Activated CD4-positive, alpha-beta memory T cell treated with anti-CD3 and anti-CD28 coated beads for 36 hours (primary cell): ENCODE measurements at regions of chr18 and their contacts with region 1.

Region 1: DNA sequence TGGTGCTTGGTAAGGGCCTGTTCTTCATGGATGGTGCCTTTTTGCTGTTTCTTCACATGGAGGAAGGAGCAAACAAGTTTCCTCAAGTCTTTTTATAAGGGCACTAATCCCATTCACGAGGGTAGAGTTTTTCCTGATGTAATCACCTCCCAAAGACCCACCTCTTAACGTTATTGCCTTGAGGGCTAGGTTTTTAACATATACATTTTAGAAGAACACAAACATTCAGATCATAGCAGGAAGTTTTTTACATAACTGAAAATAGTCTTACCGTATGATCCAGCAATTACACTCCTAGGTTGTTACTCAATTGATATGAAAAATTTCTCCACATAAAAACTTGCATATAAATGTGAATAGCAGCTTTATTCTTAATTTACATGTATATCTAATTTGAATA is 976.3 kb downstream of the DSC3 start:
- DNase-seq: no peak
- H3K4me3 Mint-ChIP-seq: no peak overlapping the region
- H3K27ac Mint-ChIP-seq: no peak overlapping the region
- H3K4me1 Mint-ChIP-seq: no peaks in the 10 kb centered on the region
- H3K27me3 Mint-ChIP-seq: no peaks in the 10 kb centered on the region

Region 2: DNA sequence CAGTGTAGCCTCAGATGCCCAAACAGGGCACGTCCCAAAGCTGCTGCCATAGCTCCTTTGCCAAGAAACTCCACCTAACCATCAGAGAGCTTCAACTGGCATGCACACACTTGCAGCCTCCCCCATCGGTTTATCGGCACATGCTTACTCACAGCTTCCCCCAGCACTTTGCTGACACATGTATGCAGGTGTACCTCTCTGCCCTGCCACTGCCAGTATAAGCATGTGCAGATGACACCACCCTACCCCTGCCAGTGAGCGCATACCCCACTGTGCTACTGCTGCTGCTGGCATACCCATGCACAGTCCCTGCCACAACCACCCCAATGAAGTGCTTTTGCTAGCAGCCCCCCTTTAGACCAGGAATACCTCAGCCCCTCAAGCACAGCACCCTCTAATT is 254.8 kb before region 1 on chr18:
- CTCF ChIA-PET with region 1: no interaction called
- POLR2A ChIA-PET with region 1: no interaction called
- intact Hi-C with region 1: no loop called
- DNase-seq: no peak
- H3K4me3 Mint-ChIP-seq: no peak overlapping the region
- H3K27ac Mint-ChIP-seq: no peak overlapping the region
- H3K4me1 Mint-ChIP-seq: no peaks in the 10 kb centered on the region
- H3K27me3 Mint-ChIP-seq: no peaks in the 10 kb centered on the region

Region 3: DNA sequence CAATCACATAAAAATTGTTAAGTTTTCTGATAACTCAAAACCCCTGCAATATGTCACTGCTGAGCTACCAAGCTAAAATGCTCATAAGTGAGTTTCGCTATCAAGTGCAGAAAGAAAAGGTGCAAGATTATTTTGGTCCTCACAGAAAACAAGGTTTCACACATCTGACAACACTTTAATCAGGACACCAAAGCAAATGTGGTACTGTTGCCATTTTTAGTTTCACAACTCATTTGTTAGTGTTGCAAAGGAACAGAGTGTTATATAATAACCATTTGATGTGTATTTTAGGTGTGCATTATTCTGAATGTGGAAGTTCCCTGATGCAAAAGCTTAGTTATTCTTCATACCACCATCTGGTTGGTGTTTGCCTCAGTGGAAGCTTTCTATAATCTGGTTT is 20.1 kb after region 1 on chr18:
- CTCF ChIA-PET with region 1: no interaction called
- POLR2A ChIA-PET with region 1: no interaction called
- intact Hi-C with region 1: loop called (anchors 2 kb)
- DNase-seq: no peak
- H3K4me3 Mint-ChIP-seq: no peak overlapping the region
- H3K27ac Mint-ChIP-seq: no peak overlapping the region
- H3K4me1 Mint-ChIP-seq: no peaks in the 10 kb centered on the region
- H3K27me3 Mint-ChIP-seq: no peaks in the 10 kb centered on the region